Activated CD8-positive, alpha-beta memory T cell treated with anti-CD3 and anti-CD28 coated beads, Interleukin-2, amount 10 ng/mL, durations not matched to agents 7 days and 5 days (primary cell): ENCODE measurements at regions of chr19 and their contacts with region 1.

Region 1: DNA sequence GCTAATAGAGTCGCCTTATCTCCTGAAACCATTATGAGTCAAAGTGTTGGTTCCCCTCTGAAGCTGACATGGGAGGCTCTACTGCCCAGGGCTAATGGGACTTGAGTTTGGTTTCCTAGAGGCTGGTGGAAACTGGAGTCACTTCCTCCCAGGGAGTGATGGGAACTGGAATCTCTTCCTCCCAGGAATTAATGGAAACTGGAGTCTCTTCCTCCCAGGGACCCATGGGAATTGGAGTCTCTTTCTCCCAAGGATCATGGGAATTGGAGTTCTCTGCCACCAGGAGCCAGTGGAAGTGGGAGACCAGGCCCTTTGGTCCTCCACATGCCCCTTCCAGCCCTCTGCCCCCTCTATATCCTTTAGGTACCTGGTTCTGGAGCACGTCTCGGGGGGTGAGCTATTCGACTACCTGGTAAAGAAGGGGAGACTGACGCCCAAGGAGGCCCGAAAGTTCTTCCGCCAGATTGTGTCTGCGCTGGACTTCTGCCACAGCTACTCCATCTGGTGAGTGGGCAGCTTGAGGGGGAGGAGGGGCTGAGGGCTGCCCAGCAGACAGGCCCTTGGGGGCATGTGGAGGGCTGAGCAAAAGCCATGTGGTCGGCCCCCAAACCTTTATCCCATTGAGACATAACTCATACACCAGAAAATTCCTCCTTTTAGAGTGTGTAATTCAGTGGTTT is 5.5 kb downstream of the BRSK1 start:
- DNase-seq: no peak
- ATAC-seq: no peak
- H3K4me3 Mint-ChIP-seq: no peak overlapping the region
- H3K27ac Mint-ChIP-seq: no peak overlapping the region
- H3K4me1 Mint-ChIP-seq: peaks cover 8% of the 10 kb centered on the region
- H3K27me3 Mint-ChIP-seq: no peaks in the 10 kb centered on the region

Region 2: GRCh38 chr19:54995561-54995960 is 293.7 kb before region 1 on chr19:
- CTCF ChIA-PET with region 1: no interaction called
- DNase-seq: no peak
- ATAC-seq: no peak
- H3K4me3 Mint-ChIP-seq: no peak overlapping the region
- H3K27ac Mint-ChIP-seq: no peak overlapping the region
- H3K4me1 Mint-ChIP-seq: no peaks in the 10 kb centered on the region
- H3K27me3 Mint-ChIP-seq: no peaks in the 10 kb centered on the region

Region 3: DNA sequence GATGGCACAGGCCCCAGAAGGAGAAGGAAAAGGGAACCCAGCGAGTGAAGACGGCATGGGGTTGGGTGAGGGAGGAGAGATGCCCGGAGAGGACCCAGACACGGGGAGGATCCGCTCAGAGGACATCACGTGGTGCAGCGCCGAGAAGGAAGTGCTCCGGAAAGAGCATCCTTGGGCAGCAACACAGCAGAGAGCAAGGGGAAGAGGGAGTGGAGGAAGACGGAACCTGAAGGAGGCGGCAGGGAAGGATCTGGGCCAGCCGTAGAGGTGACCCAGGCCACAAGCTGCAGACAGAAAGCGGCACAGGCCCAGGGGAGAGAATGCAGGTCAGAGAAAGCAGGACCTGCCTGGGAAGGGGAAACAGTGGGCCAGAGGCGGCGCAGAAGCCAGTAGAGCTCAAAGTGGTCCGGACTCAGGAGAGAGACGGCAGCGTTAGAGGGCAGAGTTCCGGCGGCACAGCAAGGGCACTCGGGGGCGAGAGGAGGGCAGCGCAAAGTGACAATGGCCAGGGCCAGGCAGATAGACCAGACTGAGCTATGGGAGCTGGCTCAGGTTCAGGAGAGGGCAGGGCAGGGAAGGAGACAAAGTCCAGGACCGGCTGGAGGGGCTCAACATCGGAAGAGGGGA is 172.9 kb before region 1 on chr19:
- CTCF ChIA-PET with region 1: no interaction called
- DNase-seq: peak; percentile 77
- ATAC-seq: peak; percentile 41
- H3K4me3 Mint-ChIP-seq: peak overlapping the region; percentile 96
- H3K27ac Mint-ChIP-seq: peak overlapping the region; percentile 91
- H3K4me1 Mint-ChIP-seq: peaks cover 36% of the 10 kb centered on the region
- H3K27me3 Mint-ChIP-seq: no peaks in the 10 kb centered on the region

Region 4: DNA sequence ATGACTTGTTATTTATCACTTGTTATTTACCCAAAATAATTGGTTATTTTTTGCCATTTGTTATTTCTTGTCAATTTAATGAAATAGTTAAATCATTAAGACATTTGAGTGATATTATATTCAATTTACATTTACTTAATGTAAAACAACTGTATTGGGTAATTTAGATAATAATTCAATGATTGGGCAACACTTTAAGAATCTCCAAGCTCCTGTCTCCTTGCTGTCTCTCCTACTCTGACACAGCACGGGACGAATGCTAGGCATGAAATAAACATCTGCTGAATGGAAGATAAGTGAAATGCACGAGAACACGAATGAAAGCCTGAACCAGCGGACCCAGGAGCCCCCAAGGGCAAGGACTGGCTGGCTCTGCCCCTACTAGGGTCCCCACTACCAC is 24.7 kb before region 1 on chr19:
- CTCF ChIA-PET with region 1: no interaction called
- DNase-seq: no peak
- ATAC-seq: no peak
- H3K4me3 Mint-ChIP-seq: no peak overlapping the region
- H3K27ac Mint-ChIP-seq: no peak overlapping the region
- H3K4me1 Mint-ChIP-seq: peaks cover 13% of the 10 kb centered on the region
- H3K27me3 Mint-ChIP-seq: no peaks in the 10 kb centered on the region

Region 5: GRCh38 chr19:55339048-55339888 is 50.0 kb after region 1 on chr19 and contains the start of gene KMT5C:
- CTCF ChIA-PET with region 1: interaction called, 21 read pairs
- DNase-seq: peak; percentile 100
- ATAC-seq: peak; percentile 87
- H3K4me3 Mint-ChIP-seq: peak within 1 kb of the TSS; percentile 73
- H3K27ac Mint-ChIP-seq: peak within 1 kb of the TSS; percentile 90
- H3K4me1 Mint-ChIP-seq: peaks cover 17% of the 10 kb centered on the region
- H3K27me3 Mint-ChIP-seq: peaks cover 14% of the 10 kb centered on the region
- total RNA-seq, gene KMT5C: 26.4 to 35.3 TPM

Region 6: DNA sequence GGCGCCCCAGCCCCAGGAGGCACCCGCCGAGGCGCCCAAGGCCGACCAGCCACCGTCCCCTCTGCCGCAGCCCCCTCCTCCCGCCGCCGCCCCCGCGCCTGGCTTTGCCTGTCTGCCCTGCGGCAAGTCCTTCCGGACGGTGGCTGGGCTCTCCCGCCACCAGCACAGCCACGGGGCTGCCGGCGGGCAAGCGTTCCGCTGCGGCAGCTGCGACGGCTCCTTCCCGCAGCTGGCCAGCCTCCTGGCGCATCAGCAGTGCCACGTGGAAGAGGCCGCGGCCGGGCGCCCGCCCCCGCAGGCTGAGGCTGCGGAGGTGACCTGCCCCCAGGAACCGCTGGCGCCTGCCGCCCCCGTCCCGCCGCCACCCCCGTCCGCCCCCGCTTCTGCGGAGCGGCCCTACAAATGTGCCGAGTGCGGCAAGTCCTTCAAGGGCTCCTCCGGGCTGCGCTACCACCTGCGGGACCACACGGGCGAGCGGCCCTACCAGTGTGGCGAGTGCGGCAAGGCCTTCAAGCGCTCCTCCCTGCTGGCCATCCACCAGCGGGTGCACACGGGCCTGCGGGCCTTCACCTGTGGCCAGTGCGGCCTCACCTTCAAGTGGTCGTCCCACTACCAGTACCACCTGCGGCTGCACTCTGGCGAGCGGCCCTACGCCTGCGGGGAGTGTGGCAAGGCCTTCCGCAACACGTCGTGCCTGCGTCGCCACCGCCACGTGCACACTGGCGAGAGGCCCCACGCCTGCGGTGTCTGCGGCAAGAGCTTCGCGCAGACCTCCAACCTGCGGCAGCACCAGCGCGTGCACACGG is 193.1 kb after region 1 on chr19:
- CTCF ChIA-PET with region 1: no interaction called
- DNase-seq: no peak
- ATAC-seq: no peak
- H3K4me3 Mint-ChIP-seq: no peak overlapping the region
- H3K27ac Mint-ChIP-seq: no peak overlapping the region
- H3K4me1 Mint-ChIP-seq: peaks cover 28% of the 10 kb centered on the region
- H3K27me3 Mint-ChIP-seq: no peaks in the 10 kb centered on the region